CD8-positive, alpha-beta T cell (primary cell): ENCODE measurements at regions of chr11 and their contacts with region 1.

Region 1: GRCh38 chr11:19951558-19952115 is 208.6 kb downstream of the DBX1 start:
- DNase-seq: peak in 2 of 9 experiments; percentile 49 to 66
- ATAC-seq: peak; percentile 51
- H3K4me3 ChIP-seq: no peak overlapping the region
- H3K4me3 Mint-ChIP-seq: peak overlapping the region; percentile 57
- H3K27ac ChIP-seq: no peak overlapping the region
- H3K27ac Mint-ChIP-seq: no peak overlapping the region
- H3K4me1 ChIP-seq: no peaks in the 10 kb centered on the region
- H3K4me1 Mint-ChIP-seq: peaks cover 4% of the 10 kb centered on the region
- H3K27me3 ChIP-seq: no peaks in the 10 kb centered on the region
- H3K27me3 Mint-ChIP-seq: peaks cover 11% of the 10 kb centered on the region
- CTCF ChIP-seq: peak; percentile 71

Region 2: DNA sequence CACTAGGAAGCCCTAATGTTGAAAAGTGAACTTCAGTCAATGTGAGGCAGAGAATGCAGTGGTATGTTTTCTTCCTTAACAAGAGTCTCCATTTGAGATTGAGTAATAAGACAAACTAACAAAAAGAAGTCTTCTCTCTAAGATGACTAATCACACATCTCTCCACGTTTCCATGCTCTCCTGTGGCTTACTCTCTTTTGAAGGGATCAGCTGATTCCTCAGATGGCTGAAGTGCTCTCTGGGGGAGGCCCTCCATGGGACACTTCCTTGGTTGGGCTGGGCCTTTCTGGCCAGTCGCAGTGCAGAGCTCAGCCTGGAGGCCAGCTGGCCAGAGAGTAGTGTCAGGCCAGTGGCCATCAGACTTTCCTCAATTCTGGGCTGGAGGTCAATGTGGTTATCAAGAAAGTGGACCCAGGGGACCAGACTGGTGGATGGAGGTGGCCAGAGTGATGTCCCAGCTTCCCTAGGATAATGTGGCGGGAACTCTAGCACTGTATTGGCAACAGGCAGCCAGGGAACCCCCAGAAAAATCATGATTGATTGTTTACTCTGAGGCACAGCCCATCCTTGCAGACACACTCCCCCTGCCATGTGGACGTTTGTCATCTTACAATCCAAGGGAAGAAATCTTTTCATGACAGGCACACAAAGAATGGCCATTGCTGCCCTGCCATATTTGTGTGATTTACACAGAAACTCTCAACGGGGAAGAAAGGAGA is 764.4 kb before region 1 on chr11:
- CTCF ChIA-PET with region 1: no interaction called
- POLR2A ChIA-PET with region 1: no interaction called
- intact Hi-C with region 1: no loop called
- DNase-seq: no peak
- ATAC-seq: no peak
- H3K4me3 ChIP-seq: no peak overlapping the region
- H3K4me3 Mint-ChIP-seq: no peak overlapping the region
- H3K27ac ChIP-seq: no peak overlapping the region
- H3K27ac Mint-ChIP-seq: no peak overlapping the region
- H3K4me1 ChIP-seq: no peaks in the 10 kb centered on the region
- H3K4me1 Mint-ChIP-seq: no peaks in the 10 kb centered on the region
- H3K27me3 ChIP-seq: no peaks in the 10 kb centered on the region
- H3K27me3 Mint-ChIP-seq: no peaks in the 10 kb centered on the region
- CTCF ChIP-seq: no peak

Region 3: DNA sequence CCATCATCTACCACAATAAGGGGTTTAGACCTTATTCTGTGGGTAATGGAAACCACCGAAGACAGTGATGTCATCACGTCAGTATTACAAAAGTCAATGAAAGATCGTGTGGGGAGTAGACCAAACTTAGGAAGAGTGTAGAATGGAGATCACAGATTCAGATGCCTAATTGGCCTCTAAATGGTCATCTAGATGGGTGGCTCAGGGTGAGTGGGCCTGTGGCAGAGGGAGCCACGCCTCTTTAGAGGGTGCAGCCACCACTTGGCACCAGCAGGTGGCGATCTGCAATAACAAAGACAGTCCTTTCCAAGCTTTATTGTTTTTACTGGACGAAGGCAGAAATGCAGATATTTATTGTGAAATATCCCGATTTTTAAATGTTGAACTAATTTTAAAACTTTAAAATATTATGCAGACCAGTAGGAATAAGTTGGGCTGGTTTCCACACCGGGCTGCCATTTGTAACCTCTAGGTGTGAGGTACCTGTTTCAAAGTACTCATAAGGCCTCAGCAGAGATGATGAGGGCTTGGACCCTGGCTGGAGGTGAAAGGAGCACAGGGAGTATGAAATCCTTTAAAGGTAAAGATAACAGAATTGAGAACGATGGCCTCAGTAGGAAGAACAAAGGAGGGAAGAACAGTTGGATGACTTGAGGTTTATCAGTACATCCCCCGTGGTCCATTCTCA is 13.3 kb before region 1 on chr11:
- CTCF ChIA-PET with region 1: interaction called, 16 read pairs
- POLR2A ChIA-PET with region 1: no interaction called
- intact Hi-C with region 1: no loop called
- DNase-seq: peak in 4 of 9 experiments; percentile 16 to 46 (median 24)
- ATAC-seq: no peak
- H3K4me3 ChIP-seq: no peak overlapping the region
- H3K4me3 Mint-ChIP-seq: no peak overlapping the region
- H3K27ac ChIP-seq: no peak overlapping the region
- H3K27ac Mint-ChIP-seq: no peak overlapping the region
- H3K4me1 ChIP-seq: no peaks in the 10 kb centered on the region
- H3K4me1 Mint-ChIP-seq: no peaks in the 10 kb centered on the region
- H3K27me3 ChIP-seq: no peaks in the 10 kb centered on the region
- H3K27me3 Mint-ChIP-seq: no peaks in the 10 kb centered on the region
- CTCF ChIP-seq: peak; percentile 49

Region 4: GRCh38 chr11:19962801-19963175 is 11.2 kb after region 1 on chr11:
- CTCF ChIA-PET with region 1: interaction called, 16 read pairs
- POLR2A ChIA-PET with region 1: no interaction called
- intact Hi-C with region 1: no loop called
- DNase-seq: no peak
- ATAC-seq: no peak
- H3K4me3 ChIP-seq: no peak overlapping the region
- H3K4me3 Mint-ChIP-seq: no peak overlapping the region
- H3K27ac ChIP-seq: no peak overlapping the region
- H3K27ac Mint-ChIP-seq: no peak overlapping the region
- H3K4me1 ChIP-seq: peaks cover 12% of the 10 kb centered on the region
- H3K4me1 Mint-ChIP-seq: peaks cover 13% of the 10 kb centered on the region
- H3K27me3 ChIP-seq: no peaks in the 10 kb centered on the region
- H3K27me3 Mint-ChIP-seq: peaks cover 6% of the 10 kb centered on the region
- CTCF ChIP-seq: no peak

Region 5: GRCh38 chr11:20110908-20111669 is 159.5 kb after region 1 on chr11:
- CTCF ChIA-PET with region 1: interaction called, 15 read pairs
- POLR2A ChIA-PET with region 1: no interaction called
- intact Hi-C with region 1: loop called in 1 of 2 experiments (anchors 1 kb)
- DNase-seq: peak in 7 of 9 experiments; percentile 1 to 69 (median 34)
- ATAC-seq: peak; percentile 80
- H3K4me3 ChIP-seq: no peak overlapping the region
- H3K4me3 Mint-ChIP-seq: no peak overlapping the region
- H3K27ac ChIP-seq: no peak overlapping the region
- H3K27ac Mint-ChIP-seq: no peak overlapping the region
- H3K4me1 ChIP-seq: no peaks in the 10 kb centered on the region
- H3K4me1 Mint-ChIP-seq: no peaks in the 10 kb centered on the region
- H3K27me3 ChIP-seq: no peaks in the 10 kb centered on the region
- H3K27me3 Mint-ChIP-seq: peaks cover 8% of the 10 kb centered on the region
- CTCF ChIP-seq: peak; percentile 43

Region 6: DNA sequence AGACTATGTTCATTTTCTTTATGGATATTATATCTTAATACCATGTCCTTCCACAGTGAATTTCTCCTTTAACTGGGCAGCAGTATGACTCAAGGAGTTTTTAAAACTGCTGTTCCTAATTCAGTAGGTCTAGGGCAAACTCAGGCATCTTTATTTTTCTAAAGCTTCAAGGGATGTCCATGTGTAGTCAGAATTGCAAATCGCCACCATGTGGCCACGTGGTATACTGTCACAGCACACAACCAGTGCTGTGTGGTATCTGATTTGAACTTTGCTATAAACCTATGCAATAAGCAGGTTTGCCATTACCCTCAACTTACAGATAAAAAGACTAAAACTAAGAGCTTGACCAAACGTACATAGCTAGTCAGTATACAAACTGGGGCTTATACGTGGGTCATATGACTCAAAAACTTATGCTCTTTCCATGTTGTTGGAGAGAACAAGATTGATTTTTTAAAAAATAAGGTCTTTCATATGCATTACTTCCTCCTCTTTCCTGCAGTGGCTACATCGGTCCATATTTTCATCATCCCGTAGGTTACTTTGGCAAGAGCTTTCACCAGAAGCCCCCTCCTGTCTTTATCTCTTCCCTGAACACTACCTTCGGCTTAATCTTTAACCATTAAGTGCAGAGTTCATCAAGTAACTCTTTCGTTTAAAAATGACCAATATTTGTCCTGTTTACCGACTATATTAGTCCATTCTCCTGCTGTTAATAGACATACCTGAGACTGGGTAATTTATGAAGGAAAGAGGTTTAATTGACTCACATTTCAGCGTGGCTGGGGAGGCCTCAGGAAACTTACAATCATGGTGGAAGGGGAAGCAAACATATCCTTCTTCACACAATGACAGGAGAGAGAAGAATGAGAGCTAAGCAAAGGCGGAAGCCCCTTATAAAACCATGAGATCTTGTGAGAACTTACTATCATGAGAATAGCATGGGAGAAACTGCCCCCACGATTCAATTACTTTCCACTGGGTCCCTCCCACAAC is 403.9 kb after region 1 on chr11:
- CTCF ChIA-PET with region 1: no interaction called
- POLR2A ChIA-PET with region 1: no interaction called
- intact Hi-C with region 1: loop called (anchors 5 to 10 kb)
- DNase-seq: peak in 6 of 9 experiments; percentile 14 to 67 (median 37)
- ATAC-seq: peak; percentile 80
- H3K4me3 ChIP-seq: no peak overlapping the region
- H3K4me3 Mint-ChIP-seq: no peak overlapping the region
- H3K27ac ChIP-seq: no peak overlapping the region
- H3K27ac Mint-ChIP-seq: no peak overlapping the region
- H3K4me1 ChIP-seq: peaks cover 3% of the 10 kb centered on the region
- H3K4me1 Mint-ChIP-seq: peaks cover 12% of the 10 kb centered on the region
- H3K27me3 ChIP-seq: no peaks in the 10 kb centered on the region
- H3K27me3 Mint-ChIP-seq: no peaks in the 10 kb centered on the region
- CTCF ChIP-seq: peak; percentile 62